ENCODE measurements at regions of chr2 and their contacts with region 1.

Region 1: DNA sequence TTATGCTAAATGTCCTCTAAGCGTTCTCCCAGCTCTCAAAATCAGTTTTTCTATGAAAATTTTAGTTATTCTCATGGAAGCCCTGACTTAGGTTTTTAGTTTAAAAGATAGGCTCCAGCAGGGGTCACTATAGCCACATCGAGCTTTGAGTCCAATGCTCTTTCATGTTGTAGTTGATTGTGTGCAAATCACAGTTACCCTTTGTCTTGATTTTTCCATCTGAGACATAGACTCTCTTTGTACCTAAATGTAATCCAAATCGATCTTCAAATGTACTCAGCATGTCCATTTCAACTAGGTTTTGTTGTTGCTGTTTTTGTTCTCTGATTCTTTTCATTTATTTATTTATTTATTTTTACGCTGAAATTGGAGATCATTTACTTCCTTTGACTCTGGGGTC is 26.4 kb upstream of the MSTN start:
- DNase-seq: no peak
- ATAC-seq: peak; percentile 82
- H3K4me3 ChIP-seq: no peak overlapping the region
- H3K27ac ChIP-seq: no peak overlapping the region
- H3K4me1 ChIP-seq: no peaks in the 10 kb centered on the region
- H3K27me3 ChIP-seq: no peaks in the 10 kb centered on the region

Region 2: DNA sequence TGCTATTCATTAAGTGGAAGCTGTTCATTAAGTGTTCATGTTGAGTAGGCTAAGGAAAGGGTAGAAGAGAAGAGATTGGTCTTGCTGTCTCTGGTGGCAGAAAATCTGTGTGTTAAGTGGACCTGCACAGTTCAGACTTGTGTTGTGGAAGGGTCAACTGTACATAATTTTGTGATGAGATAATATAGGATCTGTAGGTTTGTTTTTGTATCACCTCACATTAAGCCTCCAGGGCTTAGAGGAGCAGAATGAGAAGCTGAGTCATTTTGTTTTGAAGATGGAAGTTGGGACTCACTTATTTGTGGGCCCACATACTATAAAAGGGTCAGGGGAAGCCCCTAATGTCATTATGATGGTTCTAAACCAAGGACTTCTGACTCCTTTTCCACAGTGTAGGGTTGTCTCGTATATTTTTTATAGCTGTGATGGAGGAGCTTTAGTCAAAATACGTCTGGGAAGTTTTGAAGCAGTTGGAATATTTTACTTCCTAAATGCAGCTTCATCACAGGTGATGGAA is 286.5 kb before region 1 on chr2:
- intact Hi-C with region 1: loop called in 1 of 2 experiments (anchors 10 kb)
- DNase-seq: no peak
- ATAC-seq: no peak
- H3K4me3 ChIP-seq: no peak overlapping the region
- H3K27ac ChIP-seq: no peak overlapping the region
- H3K4me1 ChIP-seq: no peaks in the 10 kb centered on the region
- H3K27me3 ChIP-seq: no peaks in the 10 kb centered on the region

Region 3: DNA sequence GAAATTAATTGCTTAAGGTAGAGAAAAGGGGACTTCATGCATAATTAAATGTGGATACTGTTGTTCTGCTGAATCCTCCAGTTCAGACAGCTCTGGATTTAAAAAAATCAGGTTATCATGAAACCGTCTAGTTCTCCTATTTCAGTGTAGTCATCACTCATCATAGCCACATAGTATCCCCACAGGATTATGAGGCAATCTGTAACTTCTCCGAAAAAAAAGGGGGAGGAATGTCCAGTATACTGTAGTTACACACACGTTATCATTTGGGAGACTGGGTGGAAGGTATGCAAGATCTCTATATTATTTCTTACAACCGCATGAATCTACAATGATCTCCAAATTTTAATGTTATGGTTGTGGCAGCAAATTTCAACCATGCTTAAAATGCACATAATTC is 116.7 kb after region 1 on chr2:
- intact Hi-C with region 1: no loop called
- DNase-seq: no peak
- ATAC-seq: no peak
- H3K4me3 ChIP-seq: no peak overlapping the region
- H3K27ac ChIP-seq: no peak overlapping the region
- H3K4me1 ChIP-seq: no peaks in the 10 kb centered on the region
- H3K27me3 ChIP-seq: no peaks in the 10 kb centered on the region

Region 4: DNA sequence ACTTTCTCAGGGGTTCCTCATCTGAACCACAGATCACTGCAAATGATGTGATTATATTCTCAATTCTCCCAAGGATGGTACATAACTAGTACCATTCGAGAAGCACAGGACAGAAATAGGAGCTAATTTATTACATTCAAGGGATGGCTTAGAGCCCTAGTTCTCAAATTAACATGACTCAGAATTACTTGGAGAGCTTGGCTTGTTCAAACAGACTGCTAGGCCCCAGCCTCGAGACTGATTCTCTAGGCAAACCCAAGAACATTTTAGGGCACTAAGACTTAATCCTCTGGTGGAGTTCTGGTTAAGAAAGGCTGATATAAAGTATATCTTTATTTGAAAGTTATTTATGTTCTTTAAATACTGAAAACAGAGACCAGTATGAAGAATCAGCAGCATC is 194.9 kb after region 1 on chr2:
- intact Hi-C with region 1: loop called in 1 of 2 experiments (anchors 10 kb)
- DNase-seq: no peak
- ATAC-seq: peak; percentile 67
- H3K4me3 ChIP-seq: no peak overlapping the region
- H3K27ac ChIP-seq: no peak overlapping the region
- H3K4me1 ChIP-seq: peaks cover 0 to 4% of the 10 kb centered on the region in 2 donors
- H3K27me3 ChIP-seq: no peaks in the 10 kb centered on the region

Region 5: DNA sequence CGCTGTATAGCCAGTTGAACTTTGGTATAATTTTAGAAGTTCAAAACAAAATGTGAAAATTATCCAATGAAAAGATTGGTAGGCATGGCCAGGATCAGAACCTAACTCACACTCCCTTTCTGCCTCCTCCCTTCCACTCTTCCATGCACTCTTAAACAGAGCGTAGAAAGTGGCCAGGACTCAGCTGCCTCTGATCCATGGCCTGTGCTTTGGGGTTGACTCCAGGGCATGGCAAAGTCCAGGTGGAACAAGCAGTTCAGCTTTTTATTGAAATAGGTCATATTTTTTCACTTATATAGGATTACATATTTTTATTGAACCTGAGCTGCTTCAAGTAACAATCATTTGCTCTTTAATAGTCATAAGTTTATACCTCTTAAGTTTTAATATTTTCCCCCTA is 280.7 kb after region 1 on chr2:
- intact Hi-C with region 1: loop called (anchors 2 to 5 kb)
- DNase-seq: no peak
- ATAC-seq: no peak
- H3K4me3 ChIP-seq: no peak overlapping the region
- H3K27ac ChIP-seq: no peak overlapping the region
- H3K4me1 ChIP-seq: peaks cover 0 to 1% of the 10 kb centered on the region in 2 donors
- H3K27me3 ChIP-seq: no peaks in the 10 kb centered on the region

Region 6: DNA sequence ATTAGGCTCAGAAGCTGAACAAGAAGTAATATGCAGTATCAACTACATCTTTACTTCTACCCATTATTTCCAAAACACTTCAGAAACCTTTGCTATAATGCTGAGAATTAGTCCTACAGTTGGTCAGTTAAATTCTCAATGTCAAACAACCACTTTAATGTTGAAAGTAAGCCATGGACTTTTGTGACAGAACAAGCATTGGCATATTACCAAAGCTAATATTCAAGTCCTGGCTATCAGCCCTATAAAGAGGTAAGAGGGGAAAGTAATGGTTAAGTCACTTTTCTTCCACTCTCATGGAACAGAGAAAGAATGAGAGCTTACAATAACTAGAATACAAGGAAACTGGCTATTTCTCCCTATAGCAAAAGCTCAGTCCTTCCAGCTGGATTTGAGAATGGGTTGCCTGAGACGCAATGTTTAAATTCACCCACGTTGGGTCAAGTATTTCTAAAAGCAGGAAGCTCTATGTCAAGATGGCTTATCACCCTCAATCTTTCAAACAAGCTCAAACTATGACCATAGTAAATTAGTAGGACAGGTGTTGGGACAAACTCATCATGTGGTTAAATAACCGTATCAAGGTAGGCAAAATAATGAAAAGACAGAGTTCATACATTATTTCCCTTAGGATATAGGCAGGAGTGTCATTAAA is 287.8 kb after region 1 on chr2:
- intact Hi-C with region 1: loop called (anchors 2 to 5 kb)
- DNase-seq: no peak
- ATAC-seq: no peak
- H3K4me3 ChIP-seq: no peak overlapping the region
- H3K27ac ChIP-seq: no peak overlapping the region
- H3K4me1 ChIP-seq: no peaks in the 10 kb centered on the region
- H3K27me3 ChIP-seq: no peaks in the 10 kb centered on the region

Region 7: GRCh38 chr2:190511104-190511503 is 422.2 kb after region 1 on chr2:
- intact Hi-C with region 1: loop called (anchors 5 to 10 kb)
- DNase-seq: no peak
- ATAC-seq: no peak
- H3K4me3 ChIP-seq: no peak overlapping the region
- H3K27ac ChIP-seq: no peak overlapping the region
- H3K4me1 ChIP-seq: no peaks in the 10 kb centered on the region
- H3K27me3 ChIP-seq: no peaks in the 10 kb centered on the region

Measured in aorta (tissue), 5 donors.